ENCODE measurements at regions of chr12 and their contacts with region 1.

Region 1: DNA sequence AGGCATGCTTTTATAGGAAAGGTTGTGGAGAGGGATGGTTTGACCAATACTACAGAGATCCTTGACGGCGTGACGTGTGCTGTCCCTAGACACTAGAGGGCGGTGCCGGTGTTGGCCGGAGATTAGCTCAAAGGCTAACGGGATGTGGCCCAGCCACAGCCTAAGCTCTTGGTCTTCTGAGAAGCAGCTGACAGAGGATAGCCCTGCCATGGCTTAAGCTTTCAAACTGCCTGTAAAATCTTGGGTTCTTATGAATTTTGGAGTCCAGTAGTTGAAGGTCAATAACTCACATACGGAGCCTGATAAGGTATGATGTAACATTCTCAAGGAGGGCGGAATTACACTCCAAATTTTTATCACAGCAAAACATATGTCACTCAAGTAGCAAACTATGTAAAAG is 515.7 kb upstream of the ATXN7L3B start:
- DNase-seq: peak; percentile 59
- ATAC-seq: no peak
- H3K4me3 Mint-ChIP-seq: no peak overlapping the region
- H3K27ac Mint-ChIP-seq: no peak overlapping the region
- H3K4me1 Mint-ChIP-seq: no peaks in the 10 kb centered on the region
- H3K27me3 Mint-ChIP-seq: no peaks in the 10 kb centered on the region

Region 2: DNA sequence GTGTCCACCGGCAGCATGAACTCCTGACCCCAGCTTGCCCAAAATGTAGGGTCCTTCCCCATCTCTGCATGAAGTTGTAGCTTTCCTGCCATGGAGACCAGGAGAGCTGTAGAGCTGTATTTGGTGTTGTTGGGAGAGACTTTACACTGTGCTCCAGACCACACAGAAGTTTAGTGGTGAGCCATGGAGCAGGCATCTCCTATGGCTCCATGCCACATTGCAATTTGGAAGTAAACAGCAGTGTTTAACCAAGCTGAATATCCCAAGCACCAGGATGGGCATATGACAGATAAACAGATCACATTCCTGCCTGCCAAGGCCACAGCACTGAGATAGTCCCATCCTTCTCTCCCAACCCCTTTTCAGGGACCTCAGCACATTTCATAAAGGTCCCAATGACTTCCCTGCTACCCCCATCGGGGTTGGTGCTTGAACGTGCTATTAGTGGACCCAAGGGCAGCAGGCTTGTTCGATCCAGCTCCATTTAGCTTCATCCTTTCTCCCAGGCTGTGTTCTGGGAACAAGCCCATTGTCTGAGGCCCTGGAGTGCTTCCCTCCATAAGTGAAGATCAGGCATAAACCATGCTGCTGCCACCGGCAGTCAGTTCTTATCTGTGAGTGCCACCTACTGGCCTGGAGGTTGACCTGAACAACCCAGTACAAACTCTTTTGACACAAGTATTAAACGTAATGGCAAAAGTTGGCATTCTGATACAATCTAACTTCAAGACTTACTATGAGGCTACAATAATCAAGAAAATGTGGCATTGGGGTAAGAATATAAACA is 343.4 kb after region 1 on chr12:
- CTCF ChIA-PET with region 1: no interaction called
- POLR2A ChIA-PET with region 1: no interaction called
- intact Hi-C with region 1: loop called in 1 of 2 experiments (anchors 5 kb)
- DNase-seq: peak; percentile 51
- ATAC-seq: no peak
- H3K4me3 Mint-ChIP-seq: no peak overlapping the region
- H3K27ac Mint-ChIP-seq: no peak overlapping the region
- H3K4me1 Mint-ChIP-seq: no peaks in the 10 kb centered on the region
- H3K27me3 Mint-ChIP-seq: no peaks in the 10 kb centered on the region

Region 3: GRCh38 chr12:74415633-74416032 is 393.7 kb after region 1 on chr12:
- CTCF ChIA-PET with region 1: no interaction called
- POLR2A ChIA-PET with region 1: no interaction called
- intact Hi-C with region 1: loop called (anchors 5 kb)
- DNase-seq: no peak
- ATAC-seq: no peak
- H3K4me3 Mint-ChIP-seq: no peak overlapping the region
- H3K27ac Mint-ChIP-seq: no peak overlapping the region
- H3K4me1 Mint-ChIP-seq: no peaks in the 10 kb centered on the region
- H3K27me3 Mint-ChIP-seq: peaks cover 6% of the 10 kb centered on the region

Region 4: DNA sequence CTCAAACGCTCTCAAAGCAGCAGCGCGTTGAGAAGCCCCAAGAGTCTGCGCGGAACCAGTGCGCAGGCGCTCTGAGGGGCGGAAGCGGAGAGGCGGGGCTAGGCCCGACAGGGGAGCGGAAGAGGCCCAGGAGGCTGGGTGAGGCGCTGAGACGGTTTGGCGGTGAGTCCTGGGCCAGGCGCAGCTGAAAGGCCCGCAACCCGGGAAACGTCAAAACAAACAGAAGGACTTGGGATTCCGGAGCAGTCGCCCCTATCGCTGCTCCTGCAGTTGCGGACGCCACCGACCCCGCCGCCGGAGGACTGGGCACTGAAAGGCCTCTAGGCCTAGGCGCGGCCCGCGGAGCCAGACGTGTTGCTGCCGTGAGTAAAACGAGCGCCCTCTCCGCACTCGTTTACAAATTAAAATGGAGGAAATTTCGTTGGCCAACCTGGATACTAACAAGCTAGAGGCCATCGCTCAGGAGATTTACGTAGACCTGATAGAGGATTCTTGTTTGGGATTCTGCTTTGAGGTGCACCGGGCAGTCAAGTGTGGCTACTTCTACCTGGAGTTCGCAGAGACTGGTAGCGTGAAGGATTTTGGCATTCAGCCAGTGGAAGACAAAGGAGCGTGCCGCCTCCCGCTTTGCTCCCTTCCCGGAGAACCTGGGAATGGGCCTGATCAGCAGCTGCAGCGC is 515.9 kb after region 1 on chr12 and contains the start of gene ATXN7L3B:
- CTCF ChIA-PET with region 1: no interaction called
- POLR2A ChIA-PET with region 1: no interaction called
- intact Hi-C with region 1: loop called (anchors 5 kb)
- DNase-seq: peak; percentile 96
- ATAC-seq: peak; percentile 96
- H3K4me3 Mint-ChIP-seq: peak within 1 kb of the TSS; percentile 97
- H3K27ac Mint-ChIP-seq: peak within 1 kb of the TSS; percentile 97
- H3K4me1 Mint-ChIP-seq: peaks cover 50% of the 10 kb centered on the region
- H3K27me3 Mint-ChIP-seq: no peaks in the 10 kb centered on the region
- total RNA-seq, gene ATXN7L3B: 16.4 to 19.7 TPM